Activated CD4-positive, alpha-beta memory T cell treated with anti-CD3 and anti-CD28 coated beads for 36 hours (primary cell): ENCODE measurements at regions of chr1 and their contacts with region 1.

Region 1: DNA sequence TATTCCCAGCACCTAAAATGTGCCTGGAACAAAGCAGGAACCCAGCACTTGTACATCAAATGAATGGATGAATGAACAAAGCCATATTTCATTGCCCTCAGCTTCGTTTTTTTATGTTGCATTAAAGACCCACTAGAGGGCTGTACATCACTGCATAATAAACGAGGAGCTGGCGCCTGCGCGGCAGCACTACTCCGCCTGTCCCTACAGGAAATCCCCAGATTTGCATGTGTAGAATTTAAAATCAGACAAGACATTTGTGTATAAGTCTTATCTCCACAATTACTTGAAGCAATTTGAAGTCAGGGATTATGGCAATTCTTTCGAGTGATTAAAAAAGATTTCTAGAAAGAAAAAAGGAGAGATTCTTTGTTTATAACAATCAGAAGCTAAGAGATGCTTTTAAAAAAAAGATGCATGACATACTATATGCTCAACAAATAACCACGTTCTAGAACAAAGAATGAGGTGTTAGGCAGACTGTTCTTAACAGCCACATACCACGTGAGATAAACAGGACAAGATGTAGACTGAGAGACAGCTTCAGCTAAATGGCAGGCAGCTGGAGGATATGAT is 5.4 kb upstream of the NEK2 start:
- DNase-seq: peak; percentile 83
- H3K4me3 Mint-ChIP-seq: no peak overlapping the region
- H3K27ac Mint-ChIP-seq: peak overlapping the region; percentile 69
- H3K4me1 Mint-ChIP-seq: peaks cover 9% of the 10 kb centered on the region
- H3K27me3 Mint-ChIP-seq: no peaks in the 10 kb centered on the region

Region 2: GRCh38 chr1:211729238-211729637 is 48.4 kb after region 1 on chr1:
- CTCF ChIA-PET with region 1: no interaction called
- POLR2A ChIA-PET with region 1: no interaction called
- intact Hi-C with region 1: no loop called
- DNase-seq: no peak
- H3K4me3 Mint-ChIP-seq: no peak overlapping the region
- H3K27ac Mint-ChIP-seq: no peak overlapping the region
- H3K4me1 Mint-ChIP-seq: no peaks in the 10 kb centered on the region
- H3K27me3 Mint-ChIP-seq: no peaks in the 10 kb centered on the region

Region 3: GRCh38 chr1:212012034-212012740 is 331.3 kb after region 1 on chr1:
- CTCF ChIA-PET with region 1: interaction called, 12 read pairs
- POLR2A ChIA-PET with region 1: no interaction called
- intact Hi-C with region 1: no loop called
- DNase-seq: peak; percentile 78
- H3K4me3 Mint-ChIP-seq: no peak overlapping the region
- H3K27ac Mint-ChIP-seq: no peak overlapping the region
- H3K4me1 Mint-ChIP-seq: no peaks in the 10 kb centered on the region
- H3K27me3 Mint-ChIP-seq: no peaks in the 10 kb centered on the region

Region 4: DNA sequence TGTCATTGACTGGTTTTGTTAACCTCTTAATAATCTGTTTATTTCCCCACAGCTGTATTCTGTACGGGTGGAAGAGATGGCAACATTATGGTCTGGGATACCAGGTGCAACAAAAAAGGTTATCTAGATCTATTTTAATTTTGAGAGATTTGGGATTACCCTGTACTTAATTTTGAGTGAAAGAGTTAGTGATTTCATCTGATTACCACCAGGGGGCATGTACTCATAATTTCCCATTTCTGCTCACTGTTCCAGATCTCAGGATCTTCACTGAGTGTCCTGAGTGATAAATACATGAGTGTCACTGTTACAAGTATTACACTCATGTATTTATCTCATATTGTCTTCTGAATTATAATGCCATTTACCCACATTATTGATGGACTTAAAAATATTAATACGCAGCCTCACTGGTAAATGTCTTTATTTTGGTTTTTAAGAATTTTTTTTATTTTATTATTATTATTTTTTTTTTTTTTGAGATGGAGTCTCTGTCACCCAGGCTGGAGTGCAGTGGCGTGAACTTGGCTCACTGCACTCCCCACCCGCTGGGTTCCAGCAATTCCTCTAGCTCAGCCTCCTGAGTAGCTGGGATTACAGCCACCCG is 382.1 kb after region 1 on chr1:
- CTCF ChIA-PET with region 1: interaction called, 10 read pairs
- POLR2A ChIA-PET with region 1: no interaction called
- intact Hi-C with region 1: no loop called
- DNase-seq: no peak
- H3K4me3 Mint-ChIP-seq: no peak overlapping the region
- H3K27ac Mint-ChIP-seq: no peak overlapping the region
- H3K4me1 Mint-ChIP-seq: peaks cover 4% of the 10 kb centered on the region
- H3K27me3 Mint-ChIP-seq: no peaks in the 10 kb centered on the region